GM12878 (cell line): ENCODE measurements at regions of chr2 and their contacts with region 1.

Region 1: GRCh38 chr2:233251306-233252116 is at the start of gene ATG16L1:
- DNase-seq: peak; percentile 73
- ATAC-seq: peak; percentile 96
- H3K4me3 ChIP-seq: peak within 1 kb of the TSS; percentile 99
- H3K27ac ChIP-seq: peak within 1 kb of the TSS; percentile 95
- H3K4me1 ChIP-seq: peaks cover 4% of the 10 kb centered on the region; the same call in 1 of the 2 replicates
- H3K27me3 ChIP-seq: no peaks in the 10 kb centered on the region
- CTCF ChIP-seq: peak; percentile 93 to 99 (median 98); a peak in 5 of 6 replicates
- EP300 ChIP-seq: no peak
- POLR2A ChIP-seq: peak; percentile 97
- RAD21 ChIP-seq: peak; percentile 98
- polyA plus RNA-seq, gene ATG16L1: 5.2 to 7.8 TPM

Region 2: GRCh38 chr2:232611551-232612218 is 639.8 kb before region 1 on chr2:
- CTCF ChIA-PET with region 1: interaction called, 5 read pairs
- POLR2A ChIA-PET with region 1: no interaction called
- RAD21 ChIA-PET with region 1: no interaction called
- SMC1A ChIA-PET with region 1: no interaction called
- in situ Hi-C with region 1: loop called (anchors 5 kb)
- intact Hi-C with region 1: loop called (anchors 5 kb)
- DNase-seq: no peak
- ATAC-seq: peak; percentile 90
- H3K4me3 ChIP-seq: no peak overlapping the region
- H3K27ac ChIP-seq: no peak overlapping the region
- H3K4me1 ChIP-seq: no peaks in the 10 kb centered on the region
- H3K27me3 ChIP-seq: no peaks in the 10 kb centered on the region
- CTCF ChIP-seq: peak; percentile 69 to 94 (median 92)
- EP300 ChIP-seq: no peak
- POLR2A ChIP-seq: no peak
- RAD21 ChIP-seq: peak; percentile 49

Region 3: GRCh38 chr2:232854082-232854481 is 397.4 kb before region 1 on chr2:
- CTCF ChIA-PET with region 1: interaction called, 23 read pairs
- POLR2A ChIA-PET with region 1: no interaction called
- RAD21 ChIA-PET with region 1: interaction called, 5 read pairs
- SMC1A ChIA-PET with region 1: interaction called, 17 read pairs
- in situ Hi-C with region 1: loop called (anchors 5 kb)
- intact Hi-C with region 1: loop called (anchors 1 kb)
- DNase-seq: no peak
- ATAC-seq: no peak
- H3K4me3 ChIP-seq: no peak overlapping the region
- H3K27ac ChIP-seq: no peak overlapping the region
- H3K4me1 ChIP-seq: no peaks in the 10 kb centered on the region
- H3K27me3 ChIP-seq: no peaks in the 10 kb centered on the region
- CTCF ChIP-seq: no peak
- EP300 ChIP-seq: no peak
- POLR2A ChIP-seq: no peak
- RAD21 ChIP-seq: no peak

Region 4: GRCh38 chr2:233185963-233186362 is 65.5 kb before region 1 on chr2:
- CTCF ChIA-PET with region 1: interaction called, 5 read pairs
- POLR2A ChIA-PET with region 1: interaction called, 6 read pairs
- RAD21 ChIA-PET with region 1: interaction called, 9 read pairs
- SMC1A ChIA-PET with region 1: interaction called, 17 read pairs
- in situ Hi-C with region 1: no loop called
- intact Hi-C with region 1: loop called (anchors 5 kb)
- DNase-seq: peak; percentile 50
- ATAC-seq: peak; percentile 70
- H3K4me3 ChIP-seq: no peak overlapping the region
- H3K27ac ChIP-seq: peak overlapping the region; percentile 35
- H3K4me1 ChIP-seq: peaks cover 21% of the 10 kb centered on the region
- H3K27me3 ChIP-seq: no peaks in the 10 kb centered on the region
- CTCF ChIP-seq: no peak
- EP300 ChIP-seq: peak in 1 of 2 experiments; percentile 47; a peak in 1 of 4 replicates
- POLR2A ChIP-seq: no peak
- RAD21 ChIP-seq: no peak

Region 5: DNA sequence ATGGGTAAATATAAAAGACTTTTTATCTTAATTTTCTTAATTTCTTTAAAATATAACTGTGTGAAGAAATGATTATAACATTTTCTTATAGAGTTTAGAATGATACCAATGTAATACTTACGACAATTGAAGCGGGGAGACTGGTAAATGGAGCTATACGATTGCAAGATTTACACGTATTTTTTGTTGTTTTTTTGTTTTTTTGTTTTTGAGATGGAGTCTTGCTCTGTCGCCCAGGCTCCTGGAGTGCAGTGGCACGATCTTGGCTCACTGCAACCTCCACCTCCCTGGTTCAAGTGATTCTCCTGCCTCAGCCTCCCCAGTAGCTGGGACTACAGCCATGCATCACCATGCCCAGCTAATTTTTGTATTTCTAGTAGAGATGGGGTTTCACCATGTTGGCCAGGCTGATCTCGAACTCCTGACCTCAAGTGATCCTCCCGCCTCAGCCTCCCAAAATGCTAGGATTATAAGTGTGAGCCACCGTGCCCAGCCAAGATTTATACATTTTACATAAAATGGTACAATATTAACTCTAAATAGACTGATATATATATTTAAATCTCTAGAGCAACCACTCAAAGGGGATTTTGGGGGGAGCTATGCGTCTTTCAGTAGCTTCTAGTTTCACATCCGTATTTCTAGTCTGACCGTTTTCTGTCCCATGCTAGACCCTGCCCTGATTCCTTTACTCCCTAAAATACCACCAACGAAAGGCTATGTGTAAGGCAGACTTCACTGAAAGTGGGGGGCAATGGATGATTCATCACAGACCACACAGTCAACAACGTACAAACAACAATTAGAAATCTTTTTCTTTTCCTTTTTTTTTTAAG is 28.2 kb before region 1 on chr2:
- CTCF ChIA-PET with region 1: interaction called, 20 read pairs
- POLR2A ChIA-PET with region 1: interaction called, 10 read pairs
- RAD21 ChIA-PET with region 1: interaction called, 34 read pairs
- SMC1A ChIA-PET with region 1: interaction called, 24 read pairs
- in situ Hi-C with region 1: no loop called
- intact Hi-C with region 1: no loop called
- DNase-seq: peak; percentile 75
- ATAC-seq: peak; percentile 95
- H3K4me3 ChIP-seq: no peak overlapping the region
- H3K27ac ChIP-seq: peak overlapping the region; percentile 66
- H3K4me1 ChIP-seq: peaks cover 28% of the 10 kb centered on the region
- H3K27me3 ChIP-seq: no peaks in the 10 kb centered on the region
- CTCF ChIP-seq: no peak
- EP300 ChIP-seq: peak; percentile 62 to 87; a peak in 3 of 4 replicates
- POLR2A ChIP-seq: no peak
- RAD21 ChIP-seq: no peak